ENCODE measurements at regions of chr16 and their contacts with region 1.

Region 1: GRCh38 chr16:67846320-67847063 is at the start of gene NUTF2:
- DNase-seq: peak; percentile 81
- ATAC-seq: peak; percentile 76
- H3K4me3 ChIP-seq: peak within 1 kb of the TSS; percentile 83 to 96
- H3K27ac ChIP-seq: peak within 1 kb of the TSS; percentile 83
- H3K4me1 ChIP-seq: peaks cover 16 to 48% of the 10 kb centered on the region in 2 experiments
- H3K27me3 ChIP-seq: no peaks in the 10 kb centered on the region
- CTCF ChIP-seq: no peak
- POLR2A ChIP-seq: no peak
- RAD21 ChIP-seq: no peak
- total RNA-seq, gene NUTF2: 145 TPM

Region 2: GRCh38 chr16:67806428-67807147 is 39.9 kb before region 1 on chr16 and contains the starts of genes RANBP10 and TSNAXIP1:
- CTCF ChIA-PET with region 1: interaction called, 5 read pairs
- POLR2A ChIA-PET with region 1: interaction called, 6 read pairs
- RAD21 ChIA-PET with region 1: no interaction called
- intact Hi-C with region 1: loop called (anchors 1 kb)
- DNase-seq: peak; percentile 98
- ATAC-seq: peak; percentile 95
- H3K4me3 ChIP-seq: peak within 1 kb of the TSS; percentile 98 to 100
- H3K27ac ChIP-seq: peak within 1 kb of the TSS; percentile 68
- H3K4me1 ChIP-seq: peaks cover 12 to 23% of the 10 kb centered on the region in 2 experiments
- H3K27me3 ChIP-seq: no peaks in the 10 kb centered on the region
- CTCF ChIP-seq: no peak
- POLR2A ChIP-seq: peak; percentile 78
- RAD21 ChIP-seq: no peak
- total RNA-seq, gene RANBP10: 16.9 TPM
- total RNA-seq, gene TSNAXIP1: 1.2 TPM